CD4-positive, alpha-beta T cell (primary cell): ENCODE measurements at regions of chr4 and their contacts with region 1.

Region 1: DNA sequence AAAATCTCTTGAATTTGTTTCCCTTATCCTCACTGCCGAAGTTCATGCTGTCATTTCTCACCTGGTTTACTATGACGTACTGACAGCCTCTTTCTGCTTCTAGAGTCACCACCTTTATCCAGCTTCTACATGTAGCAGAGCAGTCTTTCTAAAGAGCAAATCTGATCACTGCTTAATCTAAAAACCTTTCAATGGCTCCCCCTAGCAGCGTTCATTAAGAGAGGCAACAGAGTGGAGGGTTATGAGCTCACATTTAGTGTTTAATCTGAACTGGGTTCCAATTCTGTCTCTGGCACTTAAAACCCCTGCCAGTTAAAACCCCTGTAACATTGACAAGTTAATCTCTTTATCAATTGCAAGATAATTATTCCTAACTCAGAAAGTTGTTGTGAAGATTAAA is 4.4 kb downstream of the RBPJ start:
- DNase-seq: peak in 6 of 14 experiments; percentile 10 to 79 (median 51)
- ATAC-seq: peak; percentile 34
- H3K4me3 ChIP-seq: no peak overlapping the region
- H3K4me3 Mint-ChIP-seq: peak overlapping the region; percentile 73
- H3K27ac ChIP-seq: no peak overlapping the region
- H3K27ac Mint-ChIP-seq: peak overlapping the region; percentile 40
- H3K4me1 ChIP-seq: peaks cover 24% of the 10 kb centered on the region
- H3K4me1 Mint-ChIP-seq: peaks cover 54% of the 10 kb centered on the region
- H3K27me3 ChIP-seq: no peaks in the 10 kb centered on the region
- H3K27me3 Mint-ChIP-seq: no peaks in the 10 kb centered on the region
- CTCF ChIP-seq: peak; percentile 61

Region 2: GRCh38 chr4:24488399-24489164 is 1836.6 kb before region 1 on chr4:
- CTCF ChIA-PET with region 1: no interaction called
- POLR2A ChIA-PET with region 1: no interaction called
- intact Hi-C with region 1: no loop called
- DNase-seq: peak; percentile 14 to 69 (median 38)
- ATAC-seq: no peak
- H3K4me3 ChIP-seq: no peak overlapping the region
- H3K4me3 Mint-ChIP-seq: no peak overlapping the region
- H3K27ac ChIP-seq: no peak overlapping the region
- H3K27ac Mint-ChIP-seq: no peak overlapping the region
- H3K4me1 ChIP-seq: no peaks in the 10 kb centered on the region
- H3K4me1 Mint-ChIP-seq: peaks cover 5% of the 10 kb centered on the region
- H3K27me3 ChIP-seq: peaks cover 0 to 4% of the 10 kb centered on the region in 2 experiments
- H3K27me3 Mint-ChIP-seq: peaks cover 35% of the 10 kb centered on the region
- CTCF ChIP-seq: peak; percentile 43

Region 3: DNA sequence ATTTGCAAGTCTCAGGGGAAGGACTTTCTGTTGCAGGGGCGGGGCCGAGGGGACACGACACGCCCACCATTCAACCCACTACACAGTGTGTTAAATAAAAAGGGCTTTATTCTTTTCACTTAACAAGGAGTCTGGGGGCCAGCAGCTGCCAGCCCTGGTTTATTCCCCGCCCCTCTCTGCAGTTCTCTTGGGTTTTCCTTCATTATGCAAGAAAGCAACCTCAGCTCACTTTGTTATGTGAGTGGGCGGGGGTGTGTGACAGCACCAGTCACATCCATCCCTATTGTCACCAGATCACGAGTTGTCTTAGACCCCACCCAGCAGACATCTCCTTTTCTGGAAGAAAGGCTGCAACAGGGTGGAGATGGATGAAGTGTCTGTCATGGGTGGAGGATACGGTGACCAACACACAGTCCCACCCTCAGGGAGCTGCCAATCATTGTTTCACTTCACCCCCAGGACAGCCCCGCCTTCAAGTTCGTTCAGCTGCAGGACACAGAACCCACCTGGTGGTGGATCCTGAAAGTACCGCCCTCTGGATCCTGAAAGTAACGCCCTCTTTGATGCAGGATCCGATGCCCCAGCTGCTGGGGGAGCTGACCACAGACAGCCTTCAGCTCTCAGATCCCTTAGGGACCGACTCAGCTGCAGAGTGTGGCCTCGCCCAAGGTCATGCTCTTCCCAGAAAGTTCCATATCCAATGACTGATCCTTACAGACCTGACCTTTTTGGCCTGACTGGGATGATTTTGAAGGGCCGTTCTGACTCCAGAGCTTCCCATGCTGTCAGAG is 331.6 kb before region 1 on chr4:
- CTCF ChIA-PET with region 1: interaction called, 3 read pairs
- POLR2A ChIA-PET with region 1: no interaction called
- intact Hi-C with region 1: loop called (anchors 1 to 10 kb)
- DNase-seq: peak in 3 of 14 experiments; percentile 2 to 46 (median 27)
- ATAC-seq: no peak
- H3K4me3 ChIP-seq: no peak overlapping the region
- H3K4me3 Mint-ChIP-seq: no peak overlapping the region
- H3K27ac ChIP-seq: no peak overlapping the region
- H3K27ac Mint-ChIP-seq: no peak overlapping the region
- H3K4me1 ChIP-seq: no peaks in the 10 kb centered on the region
- H3K4me1 Mint-ChIP-seq: no peaks in the 10 kb centered on the region
- H3K27me3 ChIP-seq: no peaks in the 10 kb centered on the region
- H3K27me3 Mint-ChIP-seq: no peaks in the 10 kb centered on the region
- CTCF ChIP-seq: no peak

Region 4: DNA sequence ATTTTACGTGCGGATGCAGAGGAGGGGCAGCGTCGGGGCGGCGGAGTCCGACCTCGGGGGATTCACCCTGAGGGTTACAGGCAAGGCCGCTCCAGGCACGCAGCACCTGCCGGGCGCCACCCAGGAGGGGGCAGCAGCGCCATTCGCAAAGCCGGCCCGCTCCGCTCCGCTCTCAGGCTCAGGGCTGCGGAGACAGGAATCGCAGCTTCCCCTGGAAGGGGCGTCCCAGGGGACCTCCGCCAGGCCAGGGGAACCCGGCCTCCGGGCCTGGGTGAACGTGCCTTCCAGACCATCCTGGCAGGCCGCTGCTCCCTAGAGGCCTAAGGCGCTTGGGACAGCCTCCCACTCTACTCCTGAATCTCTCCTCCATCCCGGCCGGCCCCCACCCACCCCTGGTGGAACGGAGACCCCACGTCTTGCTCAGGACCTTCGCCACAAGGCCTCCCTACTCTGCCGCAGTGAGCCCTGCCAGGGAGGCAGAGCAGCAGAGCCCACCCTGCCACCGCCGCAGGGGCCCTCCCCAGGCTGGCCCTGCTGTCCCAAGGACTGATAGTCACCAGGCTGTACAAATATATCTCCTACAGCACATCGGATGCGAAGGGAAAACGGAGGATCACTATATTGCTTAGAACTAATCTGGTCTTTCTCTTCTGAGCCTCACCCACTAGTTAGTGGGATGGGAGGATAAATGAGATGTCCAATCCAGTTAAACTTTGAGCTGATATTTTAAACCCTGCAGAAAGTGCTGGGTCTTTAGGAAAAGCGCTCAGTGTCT is 296.2 kb before region 1 on chr4:
- CTCF ChIA-PET with region 1: interaction called, 4 read pairs
- POLR2A ChIA-PET with region 1: no interaction called
- intact Hi-C with region 1: loop called in 1 of 2 experiments (anchors 2 kb)
- DNase-seq: peak; percentile 22 to 73 (median 49)
- ATAC-seq: peak; percentile 63
- H3K4me3 ChIP-seq: no peak overlapping the region
- H3K4me3 Mint-ChIP-seq: no peak overlapping the region
- H3K27ac ChIP-seq: no peak overlapping the region
- H3K27ac Mint-ChIP-seq: no peak overlapping the region
- H3K4me1 ChIP-seq: peaks cover 6% of the 10 kb centered on the region
- H3K4me1 Mint-ChIP-seq: no peaks in the 10 kb centered on the region
- H3K27me3 ChIP-seq: peaks cover 6 to 7% of the 10 kb centered on the region in 2 experiments
- H3K27me3 Mint-ChIP-seq: peaks cover 25% of the 10 kb centered on the region
- CTCF ChIP-seq: peak; percentile 52

Region 5: DNA sequence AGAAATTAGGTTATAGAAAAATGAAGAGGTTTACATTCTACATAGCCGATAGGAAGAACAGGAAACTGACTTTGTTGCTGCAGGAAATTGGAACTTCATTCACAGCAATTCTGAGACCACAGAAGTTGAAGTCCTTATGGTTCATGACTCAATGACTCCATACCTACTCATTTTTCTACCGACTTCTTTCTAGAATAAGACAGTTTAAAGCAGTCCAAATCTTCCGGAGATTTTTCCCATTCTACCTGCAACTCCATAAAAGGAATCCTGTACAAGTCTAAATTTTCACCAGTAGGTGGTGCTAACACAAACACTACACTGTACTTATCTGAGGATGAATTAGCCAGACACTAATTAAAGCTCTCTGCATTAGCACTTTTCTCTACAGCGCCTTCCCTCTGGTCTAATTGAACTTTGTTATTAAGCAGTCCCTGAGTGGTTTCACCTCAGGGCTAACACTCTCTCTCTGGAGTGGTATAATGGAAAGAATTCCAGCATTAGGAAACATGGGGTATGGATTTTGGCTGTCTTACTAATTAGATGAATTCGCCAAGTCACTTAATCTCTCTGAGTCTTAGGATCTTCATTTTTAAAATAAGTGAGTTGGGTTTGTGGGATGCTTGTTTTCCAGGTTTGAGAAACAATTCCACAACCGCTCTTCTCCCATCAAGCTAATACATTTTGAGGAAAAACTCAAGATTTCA is 243.2 kb before region 1 on chr4:
- CTCF ChIA-PET with region 1: interaction called, 8 read pairs
- POLR2A ChIA-PET with region 1: interaction called, 10 read pairs
- intact Hi-C with region 1: loop called (anchors 2 to 10 kb)
- DNase-seq: peak in 3 of 14 experiments; percentile 63 to 70 (median 69)
- ATAC-seq: no peak
- H3K4me3 ChIP-seq: no peak overlapping the region
- H3K4me3 Mint-ChIP-seq: no peak overlapping the region
- H3K27ac ChIP-seq: no peak overlapping the region
- H3K27ac Mint-ChIP-seq: no peak overlapping the region
- H3K4me1 ChIP-seq: peaks cover 14% of the 10 kb centered on the region
- H3K4me1 Mint-ChIP-seq: peaks cover 19% of the 10 kb centered on the region
- H3K27me3 ChIP-seq: no peaks in the 10 kb centered on the region
- H3K27me3 Mint-ChIP-seq: peaks cover 7% of the 10 kb centered on the region
- CTCF ChIP-seq: peak; percentile 79